ENCODE measurements at regions of chr6 and their contacts with region 1.

Region 1: DNA sequence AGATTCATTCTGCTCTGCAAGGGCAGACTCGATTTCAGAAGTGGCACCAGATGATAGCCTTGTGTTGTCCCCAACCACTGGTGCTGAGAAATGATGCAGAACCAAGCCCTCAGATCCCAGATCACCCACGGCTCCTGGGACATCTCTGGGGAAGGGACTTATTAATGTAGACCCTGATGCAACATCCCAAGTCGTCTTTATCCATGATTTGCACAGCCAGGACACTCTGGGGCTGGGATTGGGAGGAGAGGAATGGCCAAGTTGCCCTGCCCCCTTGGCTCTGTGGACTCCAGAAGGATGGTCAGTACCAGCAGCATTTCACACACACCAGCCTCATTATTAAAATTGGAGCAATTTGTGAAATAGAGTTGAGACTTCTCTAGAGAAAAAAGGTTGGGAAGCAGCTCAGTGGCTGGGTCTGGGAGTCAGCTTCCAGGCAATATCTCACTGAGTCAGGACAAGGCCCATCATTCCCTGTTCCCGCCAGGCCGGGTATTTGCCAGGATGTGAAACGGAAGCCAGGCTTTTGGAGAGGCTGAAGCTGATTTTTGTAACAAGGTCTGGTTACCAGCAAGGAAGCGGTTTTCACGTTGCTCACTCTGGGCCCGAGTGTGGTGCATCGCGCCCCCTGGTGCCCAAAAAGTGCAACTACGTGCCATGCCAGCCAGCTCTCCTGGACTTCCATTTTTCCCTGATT is 67.4 kb downstream of the ZBTB2 start:
- DNase-seq: peak; percentile 76
- CTCF ChIP-seq: peak; percentile 91

Region 2: GRCh38 chr6:150831577-150831976 is 492.4 kb before region 1 on chr6:
- CTCF ChIA-PET with region 1: interaction called, 13 read pairs
- POLR2A ChIA-PET with region 1: no interaction called
- DNase-seq: no peak
- CTCF ChIP-seq: no peak

Region 3: GRCh38 chr6:150876598-150876997 is 447.3 kb before region 1 on chr6:
- CTCF ChIA-PET with region 1: interaction called, 11 read pairs
- POLR2A ChIA-PET with region 1: no interaction called
- DNase-seq: no peak
- CTCF ChIP-seq: no peak

Region 4: DNA sequence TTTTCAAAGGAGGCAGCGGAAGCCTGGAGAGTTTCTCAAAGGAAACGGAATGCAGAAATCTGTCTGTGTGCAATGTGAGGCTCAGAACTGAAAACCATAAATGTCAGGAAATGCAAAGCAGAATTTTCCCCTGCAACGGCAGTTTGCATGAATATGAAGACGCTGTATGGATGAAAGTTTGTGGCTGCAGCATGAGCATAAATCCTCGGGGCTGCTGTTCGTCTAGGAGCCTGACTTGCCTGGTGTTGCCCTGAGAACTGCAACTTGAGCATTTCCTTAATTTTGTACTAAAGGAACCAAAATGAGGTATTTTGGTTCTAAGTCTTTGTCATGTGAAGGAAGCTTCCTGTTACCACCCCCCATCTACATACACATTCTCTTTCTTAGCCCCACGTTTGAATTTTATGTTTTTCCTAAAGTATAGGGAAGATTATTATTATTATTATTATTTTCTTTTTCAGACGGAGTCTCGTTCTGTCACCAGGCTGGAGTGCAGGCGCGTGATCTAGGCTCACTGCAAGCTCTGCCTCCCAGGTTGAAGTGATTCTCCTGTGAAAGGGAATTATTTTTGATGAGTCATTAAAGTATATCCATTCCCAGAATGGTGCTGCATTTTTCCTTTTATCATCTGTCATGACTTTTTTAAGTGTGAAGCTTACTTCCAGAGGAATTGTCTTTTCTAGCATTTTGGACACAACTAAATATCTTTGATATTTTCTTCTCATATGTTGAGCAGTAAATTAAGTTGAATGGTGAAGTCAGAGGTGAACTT is 425.4 kb before region 1 on chr6:
- CTCF ChIA-PET with region 1: interaction called, 373 read pairs
- POLR2A ChIA-PET with region 1: no interaction called
- DNase-seq: peak; percentile 32
- CTCF ChIP-seq: no peak

Region 5: DNA sequence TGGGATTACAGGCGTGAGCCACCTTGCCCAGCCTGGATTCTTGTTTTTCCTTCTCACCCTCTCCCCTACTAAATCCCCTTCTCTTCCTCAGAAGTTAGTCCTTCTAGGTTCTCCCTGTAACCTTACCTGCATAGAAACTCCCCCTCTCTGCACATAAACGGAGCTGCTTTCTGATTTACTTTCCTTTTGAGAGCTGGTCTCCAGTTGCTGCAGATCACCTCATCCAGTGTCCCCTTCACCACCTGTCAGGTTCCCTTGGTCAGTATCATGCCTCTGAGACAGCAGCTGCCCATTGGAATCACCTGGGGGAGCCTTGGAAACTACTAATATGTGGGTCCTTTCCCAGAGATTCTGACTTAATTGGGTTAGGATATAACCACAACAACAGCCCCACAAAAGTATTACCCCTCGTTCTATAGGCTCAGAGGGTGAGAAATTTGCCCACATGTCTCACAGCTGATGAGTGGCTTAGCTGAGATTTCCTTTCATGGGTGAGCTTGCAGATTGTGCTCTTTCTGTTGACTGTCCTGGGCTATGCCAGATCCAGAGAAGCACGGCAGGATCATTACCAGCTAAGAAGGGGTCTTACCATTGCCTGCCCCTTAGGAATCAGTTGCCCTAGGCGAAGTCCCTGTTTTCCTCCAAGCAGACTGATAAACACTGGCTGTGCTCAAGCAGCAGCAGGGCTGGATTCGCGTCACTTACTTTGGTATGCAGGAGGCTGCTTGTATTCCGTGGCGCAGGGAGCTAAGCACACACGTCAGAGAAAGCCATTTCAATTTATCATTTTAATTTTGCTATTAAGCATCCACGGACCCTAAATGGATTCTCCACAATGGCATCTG is 32.8 kb before region 1 on chr6:
- CTCF ChIA-PET with region 1: interaction called, 10 read pairs
- POLR2A ChIA-PET with region 1: no interaction called
- DNase-seq: no peak
- CTCF ChIP-seq: no peak

Region 6: GRCh38 chr6:151340219-151340978 is 16.5 kb after region 1 on chr6:
- CTCF ChIA-PET with region 1: interaction called, 87 read pairs
- POLR2A ChIA-PET with region 1: no interaction called
- DNase-seq: no peak
- CTCF ChIP-seq: no peak

Region 7: GRCh38 chr6:151357758-151358436 is 34.0 kb after region 1 on chr6:
- CTCF ChIA-PET with region 1: interaction called, 11 read pairs
- POLR2A ChIA-PET with region 1: no interaction called
- DNase-seq: no peak
- CTCF ChIP-seq: no peak